CD4-positive, alpha-beta memory T cell (primary cell): ENCODE measurements at regions of chr17 and their contacts with region 1.

Region 1: GRCh38 chr17:35879773-35880654 is at the start of gene CCL5:
- DNase-seq: peak; percentile 39 to 77 (median 47)
- H3K4me3 ChIP-seq: peak within 1 kb of the TSS in 1 of 2 donors; percentile 23
- H3K4me3 Mint-ChIP-seq: peak within 1 kb of the TSS; percentile 85 to 95 (median 90)
- H3K27ac ChIP-seq: peak within 1 kb of the TSS; percentile 61
- H3K27ac Mint-ChIP-seq: peak within 1 kb of the TSS; percentile 66 to 92 (median 88)
- H3K4me1 ChIP-seq: peaks cover 44% of the 10 kb centered on the region
- H3K4me1 Mint-ChIP-seq: peaks cover 15 to 57% (median 38%) of the 10 kb centered on the region in 4 donors
- H3K27me3 ChIP-seq: no peaks in the 10 kb centered on the region
- H3K27me3 Mint-ChIP-seq: no peaks in the 10 kb centered on the region
- total RNA-seq, gene CCL5: 279 to 309 TPM

Region 2: GRCh38 chr17:35898283-35899070 is 18.5 kb after region 1 on chr17:
- CTCF ChIA-PET with region 1: interaction called, 6 read pairs
- POLR2A ChIA-PET with region 1: interaction called, 141 read pairs
- intact Hi-C with region 1: no loop called
- DNase-seq: peak in 1 of 5 donors; percentile 54
- H3K4me3 ChIP-seq: no peak overlapping the region
- H3K4me3 Mint-ChIP-seq: peak overlapping the region in 7 of 8 donors; percentile 7 to 75 (median 24)
- H3K27ac ChIP-seq: no peak overlapping the region
- H3K27ac Mint-ChIP-seq: peak overlapping the region; percentile 22 to 68 (median 50)
- H3K4me1 ChIP-seq: peaks cover 50% of the 10 kb centered on the region
- H3K4me1 Mint-ChIP-seq: peaks cover 24 to 72% (median 53%) of the 10 kb centered on the region in 4 donors
- H3K27me3 ChIP-seq: no peaks in the 10 kb centered on the region
- H3K27me3 Mint-ChIP-seq: peaks cover 0 to 2% of the 10 kb centered on the region in 2 donors

Region 3: DNA sequence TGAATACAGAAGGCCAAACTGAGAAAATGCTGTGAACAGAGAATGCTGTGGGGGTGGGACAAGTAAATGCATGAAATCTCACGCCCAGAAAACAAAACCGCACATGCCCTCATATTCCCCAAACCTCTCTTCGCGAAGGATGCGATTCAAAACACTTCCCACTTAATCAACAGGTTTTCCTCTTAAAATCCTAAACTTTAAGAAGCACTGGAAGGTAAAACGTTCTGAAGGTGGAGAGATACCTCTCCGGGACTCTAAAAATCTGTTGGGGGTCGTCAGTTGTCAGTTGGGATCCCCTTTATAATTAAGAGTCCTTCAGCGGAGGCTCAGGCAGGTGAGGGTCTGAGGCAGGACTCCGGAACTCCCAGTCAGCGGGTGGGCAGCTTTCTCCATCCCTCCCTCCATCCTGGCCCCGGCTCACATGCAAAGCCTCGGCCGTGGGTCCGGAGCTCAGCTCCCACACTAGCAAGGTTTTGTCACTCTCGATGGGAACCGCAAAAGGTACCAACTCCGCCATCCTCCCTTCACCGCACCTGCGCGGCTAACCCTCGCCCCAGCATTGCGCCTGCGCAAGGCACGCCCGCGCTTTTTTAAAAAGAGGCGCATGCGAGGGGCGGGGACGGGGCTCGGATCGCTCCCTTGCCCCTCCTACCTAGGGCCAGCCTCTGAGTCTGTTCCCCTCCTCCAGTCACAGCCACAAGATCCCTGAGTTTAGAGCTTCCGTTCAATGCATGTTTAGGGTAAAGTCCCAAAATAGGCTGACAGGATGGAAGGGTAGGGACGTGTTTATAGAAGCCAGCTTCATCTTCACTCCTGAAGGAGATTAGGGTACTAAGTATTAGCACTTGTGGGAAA is 50.4 kb after region 1 on chr17 and contains the start of gene RDM1:
- CTCF ChIA-PET with region 1: no interaction called
- POLR2A ChIA-PET with region 1: interaction called, 26 read pairs
- intact Hi-C with region 1: no loop called
- DNase-seq: peak; percentile 72 to 78 (median 75)
- H3K4me3 ChIP-seq: peak within 1 kb of the TSS; percentile 59 to 71
- H3K4me3 Mint-ChIP-seq: peak within 1 kb of the TSS; percentile 80 to 86 (median 82)
- H3K27ac ChIP-seq: no peak within 1 kb of the TSS
- H3K27ac Mint-ChIP-seq: peak within 1 kb of the TSS; percentile 19 to 85 (median 80)
- H3K4me1 ChIP-seq: peaks cover 13% of the 10 kb centered on the region
- H3K4me1 Mint-ChIP-seq: peaks cover 7 to 20% (median 12%) of the 10 kb centered on the region in 4 donors
- H3K27me3 ChIP-seq: no peaks in the 10 kb centered on the region
- H3K27me3 Mint-ChIP-seq: no peaks in the 10 kb centered on the region
- total RNA-seq, gene RDM1: 0.87 to 1.9 TPM